ENCODE measurements at regions of chr1 and their contacts with region 1.

Region 1: GRCh38 chr1:172449585-172450534 is 6.0 kb upstream of the PIGC start:
- DNase-seq: peak; percentile 53 to 71 (median 64)
- ATAC-seq: peak; percentile 82 to 87 (median 85)
- H3K4me3 ChIP-seq: no peak overlapping the region
- H3K27ac ChIP-seq: peak overlapping the region; percentile 12 to 76 (median 64)
- H3K4me1 ChIP-seq: peaks cover 20 to 52% (median 21%) of the 10 kb centered on the region in 3 donors
- H3K27me3 ChIP-seq: no peaks in the 10 kb centered on the region
- CTCF ChIP-seq: peak; percentile 59 to 87 (median 84)

Region 2: DNA sequence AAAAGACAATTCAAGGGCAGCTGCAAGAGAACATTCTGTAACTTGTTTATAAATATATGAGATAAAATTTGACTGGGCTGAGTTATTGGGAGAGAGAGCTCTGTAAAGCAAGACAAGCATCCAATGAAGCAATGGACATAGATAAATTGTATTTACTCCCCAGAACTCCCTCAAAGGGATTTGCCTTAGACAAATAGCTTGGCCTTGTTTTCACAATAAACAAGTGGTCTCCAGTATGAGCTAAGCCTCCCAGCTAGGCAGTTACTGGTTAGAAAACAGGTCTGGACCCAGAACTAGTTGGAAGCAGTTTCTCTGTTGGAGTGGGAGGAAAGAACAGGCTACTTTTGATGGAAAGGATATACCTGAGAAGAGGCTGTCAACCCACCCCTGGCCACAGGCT is 57.9 kb after region 1 on chr1:
- intact Hi-C with region 1: no loop called
- DNase-seq: no peak
- ATAC-seq: no peak
- H3K4me3 ChIP-seq: no peak overlapping the region
- H3K27ac ChIP-seq: no peak overlapping the region
- H3K4me1 ChIP-seq: peaks cover 0 to 2% (median 0%) of the 10 kb centered on the region in 3 donors
- H3K27me3 ChIP-seq: no peaks in the 10 kb centered on the region
- CTCF ChIP-seq: no peak

Region 3: GRCh38 chr1:172719694-172720138 is 269.9 kb after region 1 on chr1:
- intact Hi-C with region 1: loop called in 1 of 3 experiments (anchors 5 kb)
- DNase-seq: no peak
- ATAC-seq: peak in 3 of 4 donors; percentile 88 to 90 (median 88)
- H3K4me3 ChIP-seq: no peak overlapping the region
- H3K27ac ChIP-seq: no peak overlapping the region
- H3K4me1 ChIP-seq: no peaks in the 10 kb centered on the region
- H3K27me3 ChIP-seq: no peaks in the 10 kb centered on the region
- CTCF ChIP-seq: peak; percentile 37 to 81 (median 62)

Measured in pancreas (tissue), 10 donors.